ENCODE measurements at regions of chr11 and their contacts with region 1.

Region 1: DNA sequence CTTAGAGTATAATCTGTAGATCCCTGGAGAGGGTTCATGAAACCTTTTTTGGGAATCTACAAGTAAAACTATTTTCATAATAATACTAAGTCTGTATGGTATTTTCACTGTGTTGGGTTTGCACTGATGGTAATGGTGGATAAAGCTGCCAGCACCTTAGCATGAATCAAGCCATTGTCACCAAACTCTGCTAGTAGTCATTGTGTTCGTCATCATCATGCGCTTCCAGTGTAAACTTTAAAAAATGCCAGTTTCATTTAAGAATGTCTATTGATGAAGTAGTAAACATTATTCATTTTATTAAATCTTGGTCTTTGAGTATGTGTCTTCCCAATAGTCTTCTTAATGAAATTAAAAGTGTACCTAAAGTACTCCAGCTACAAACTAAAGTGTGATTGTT is 15.0 kb downstream of the ALKBH3 start:
- DNase-seq: no peak
- ATAC-seq: no peak
- H3K4me3 ChIP-seq: no peak overlapping the region
- H3K4me3 Mint-ChIP-seq: no peak overlapping the region
- H3K27ac ChIP-seq: no peak overlapping the region
- H3K27ac Mint-ChIP-seq: no peak overlapping the region
- H3K4me1 ChIP-seq: no peaks in the 10 kb centered on the region
- H3K4me1 Mint-ChIP-seq: peaks cover 2% of the 10 kb centered on the region
- H3K27me3 ChIP-seq: no peaks in the 10 kb centered on the region
- H3K27me3 Mint-ChIP-seq: no peaks in the 10 kb centered on the region
- CTCF ChIP-seq: no peak

Region 2: DNA sequence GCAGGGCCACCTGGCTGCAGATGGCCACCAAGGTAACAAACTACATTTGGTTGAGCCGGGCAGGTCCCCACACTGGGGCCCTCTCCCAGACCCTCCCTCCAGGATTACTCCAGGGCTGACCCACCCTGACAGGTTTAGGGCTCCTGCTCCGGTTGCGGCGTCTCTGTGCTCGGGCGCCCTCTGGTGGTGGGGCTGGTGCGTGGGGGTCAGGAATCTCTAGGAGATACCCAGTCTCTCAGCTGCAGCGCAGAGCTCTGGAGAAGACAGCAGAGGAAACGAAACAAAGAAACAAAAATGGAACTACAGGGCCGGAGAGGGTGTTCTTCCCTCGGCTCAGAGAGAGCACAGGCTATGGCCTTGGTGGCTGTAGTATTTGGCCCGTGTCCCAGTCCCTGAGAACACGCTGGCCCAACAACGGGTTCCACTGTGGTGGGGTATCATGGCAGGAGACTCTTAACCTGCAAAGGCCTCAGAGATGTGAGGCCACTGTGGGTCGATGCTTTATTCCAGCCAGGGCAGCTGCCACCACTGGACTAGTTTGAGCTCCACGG is 49.2 kb after region 1 on chr11:
- CTCF ChIA-PET with region 1: no interaction called
- POLR2A ChIA-PET with region 1: no interaction called
- intact Hi-C with region 1: loop called in 1 of 2 experiments (anchors 1 kb)
- DNase-seq: peak; percentile 33 to 68 (median 49)
- ATAC-seq: peak; percentile 40
- H3K4me3 ChIP-seq: no peak overlapping the region
- H3K4me3 Mint-ChIP-seq: peak overlapping the region; percentile 63
- H3K27ac ChIP-seq: no peak overlapping the region
- H3K27ac Mint-ChIP-seq: no peak overlapping the region
- H3K4me1 ChIP-seq: peaks cover 11% of the 10 kb centered on the region
- H3K4me1 Mint-ChIP-seq: peaks cover 16% of the 10 kb centered on the region
- H3K27me3 ChIP-seq: peaks cover 18 to 23% of the 10 kb centered on the region in 2 experiments
- H3K27me3 Mint-ChIP-seq: peaks cover 52% of the 10 kb centered on the region
- CTCF ChIP-seq: peak; percentile 23

Region 3: GRCh38 chr11:44036811-44037657 is 141.4 kb after region 1 on chr11:
- CTCF ChIA-PET with region 1: no interaction called
- POLR2A ChIA-PET with region 1: no interaction called
- intact Hi-C with region 1: loop called in 1 of 2 experiments (anchors 10 kb)
- DNase-seq: peak in 3 of 9 experiments; percentile 4 to 40 (median 38)
- ATAC-seq: no peak
- H3K4me3 ChIP-seq: no peak overlapping the region
- H3K4me3 Mint-ChIP-seq: no peak overlapping the region
- H3K27ac ChIP-seq: no peak overlapping the region
- H3K27ac Mint-ChIP-seq: no peak overlapping the region
- H3K4me1 ChIP-seq: no peaks in the 10 kb centered on the region
- H3K4me1 Mint-ChIP-seq: no peaks in the 10 kb centered on the region
- H3K27me3 ChIP-seq: no peaks in the 10 kb centered on the region
- H3K27me3 Mint-ChIP-seq: peaks cover 8% of the 10 kb centered on the region
- CTCF ChIP-seq: no peak